Activated B cell treated with CpG ODN at 0.5 μM for 24 hours (primary cell): ENCODE measurements at regions of chr4 and their contacts with region 1.

Region 1: GRCh38 chr4:105146276-105147015 is at the start of gene TET2:
- DNase-seq: peak; percentile 72
- ATAC-seq: peak; percentile 80
- H3K4me3 Mint-ChIP-seq: peak within 1 kb of the TSS; percentile 99
- H3K27ac Mint-ChIP-seq: peak within 1 kb of the TSS; percentile 98
- H3K4me1 Mint-ChIP-seq: peaks cover 51% of the 10 kb centered on the region
- H3K27me3 Mint-ChIP-seq: no peaks in the 10 kb centered on the region
- CTCF ChIP-seq: no peak
- total RNA-seq, gene TET2: 39.7 and 51.2 TPM in 2 replicates

Region 2: GRCh38 chr4:104743215-104743653 is 403.2 kb before region 1 on chr4:
- CTCF ChIA-PET with region 1: no interaction called
- POLR2A ChIA-PET with region 1: no interaction called
- intact Hi-C with region 1: loop called (anchors 10 kb)
- DNase-seq: no peak
- ATAC-seq: peak; percentile 87
- H3K4me3 Mint-ChIP-seq: peak overlapping the region; percentile 42
- H3K27ac Mint-ChIP-seq: peak overlapping the region; percentile 83
- H3K4me1 Mint-ChIP-seq: peaks cover 22% of the 10 kb centered on the region
- H3K27me3 Mint-ChIP-seq: peaks cover 2% of the 10 kb centered on the region
- CTCF ChIP-seq: no peak

Region 3: GRCh38 chr4:104966349-104967033 is 180.0 kb before region 1 on chr4:
- CTCF ChIA-PET with region 1: no interaction called
- POLR2A ChIA-PET with region 1: no interaction called
- intact Hi-C with region 1: loop called (anchors 2 kb)
- DNase-seq: no peak
- ATAC-seq: peak; percentile 97
- H3K4me3 Mint-ChIP-seq: peak overlapping the region; percentile 70
- H3K27ac Mint-ChIP-seq: peak overlapping the region; percentile 86
- H3K4me1 Mint-ChIP-seq: peaks cover 23% of the 10 kb centered on the region
- H3K27me3 Mint-ChIP-seq: peaks cover 4% of the 10 kb centered on the region
- CTCF ChIP-seq: no peak

Region 4: GRCh38 chr4:105166066-105166465 is 19.6 kb after region 1 on chr4:
- CTCF ChIA-PET with region 1: no interaction called
- POLR2A ChIA-PET with region 1: no interaction called
- intact Hi-C with region 1: loop called (anchors 2 kb)
- DNase-seq: no peak
- ATAC-seq: no peak
- H3K4me3 Mint-ChIP-seq: no peak overlapping the region
- H3K27ac Mint-ChIP-seq: no peak overlapping the region
- H3K4me1 Mint-ChIP-seq: peaks cover 46% of the 10 kb centered on the region
- H3K27me3 Mint-ChIP-seq: no peaks in the 10 kb centered on the region
- CTCF ChIP-seq: no peak

Region 5: DNA sequence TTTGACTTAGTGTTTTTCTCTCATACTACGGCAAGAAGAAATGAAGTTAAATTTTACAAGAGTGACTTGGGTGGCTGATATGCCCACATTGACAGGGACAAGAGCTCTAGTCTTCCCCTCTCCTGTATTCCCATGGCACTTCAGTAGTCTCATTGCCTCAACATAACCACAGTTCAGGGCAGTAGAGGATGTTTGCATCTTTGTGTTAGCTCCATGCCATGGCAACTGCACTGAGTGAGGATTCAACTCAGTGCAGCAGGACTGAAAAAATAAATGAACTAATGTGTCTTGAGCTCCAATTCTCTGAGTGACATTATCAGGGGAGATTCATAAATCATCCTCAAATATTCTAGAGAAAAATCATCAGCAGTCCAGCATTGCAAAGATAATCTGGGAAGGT is 79.1 kb after region 1 on chr4:
- CTCF ChIA-PET with region 1: no interaction called
- POLR2A ChIA-PET with region 1: no interaction called
- intact Hi-C with region 1: no loop called
- DNase-seq: no peak
- ATAC-seq: no peak
- H3K4me3 Mint-ChIP-seq: no peak overlapping the region
- H3K27ac Mint-ChIP-seq: no peak overlapping the region
- H3K4me1 Mint-ChIP-seq: peaks cover 14% of the 10 kb centered on the region
- H3K27me3 Mint-ChIP-seq: no peaks in the 10 kb centered on the region
- CTCF ChIP-seq: no peak

Region 6: GRCh38 chr4:105236202-105236915 is 89.9 kb after region 1 on chr4:
- CTCF ChIA-PET with region 1: no interaction called
- POLR2A ChIA-PET with region 1: interaction called, 3 read pairs
- intact Hi-C with region 1: loop called (anchors 2 kb)
- DNase-seq: no peak
- ATAC-seq: peak; percentile 68
- H3K4me3 Mint-ChIP-seq: peak overlapping the region; percentile 46
- H3K27ac Mint-ChIP-seq: peak overlapping the region; percentile 73
- H3K4me1 Mint-ChIP-seq: peaks cover 65% of the 10 kb centered on the region
- H3K27me3 Mint-ChIP-seq: no peaks in the 10 kb centered on the region
- CTCF ChIP-seq: no peak

Region 7: DNA sequence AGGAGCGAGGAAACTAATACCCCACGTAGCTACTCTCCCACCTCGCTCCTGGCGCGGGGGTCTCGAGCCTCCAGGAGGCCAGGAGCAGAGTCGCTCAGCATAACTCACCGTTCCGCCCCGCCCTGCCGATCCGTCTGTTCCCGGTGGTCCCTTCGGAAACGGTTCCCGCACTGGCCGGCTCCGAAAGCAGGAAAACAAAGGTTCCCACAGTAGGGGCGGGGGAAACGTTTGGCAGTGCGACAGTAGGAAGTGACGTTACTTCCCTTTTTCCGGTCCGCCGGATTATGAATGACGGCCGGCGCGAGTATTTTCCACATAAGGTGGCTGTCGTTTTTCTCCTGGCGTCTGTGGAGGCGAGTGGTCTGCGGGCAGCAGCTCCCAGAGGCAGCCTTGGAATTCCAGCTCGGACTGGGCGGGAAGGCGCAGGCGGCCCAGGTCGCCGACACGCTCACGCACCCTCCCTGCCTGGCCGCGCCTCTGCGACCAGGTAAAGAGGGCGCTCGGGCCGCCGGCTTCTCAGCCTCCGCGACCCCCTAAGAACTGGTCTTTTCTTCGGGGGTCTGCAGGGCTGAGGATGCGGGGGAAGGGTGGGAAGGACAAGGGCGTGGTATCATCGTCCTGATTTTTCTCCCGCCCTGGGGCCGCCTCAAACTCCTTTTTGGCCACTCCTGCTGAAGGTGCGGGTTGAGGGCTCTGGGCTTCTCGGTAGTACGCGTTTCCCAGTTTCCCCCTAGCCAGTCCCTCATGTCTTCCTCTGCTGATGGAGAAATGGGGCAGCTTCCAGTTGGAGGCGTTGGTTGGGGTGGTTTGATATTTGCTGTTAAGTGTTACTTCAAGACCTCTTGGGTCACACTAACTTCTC is 562.3 kb after region 1 on chr4 and contains the starts of genes GSTCD and INTS12:
- CTCF ChIA-PET with region 1: no interaction called
- POLR2A ChIA-PET with region 1: no interaction called
- intact Hi-C with region 1: loop called (anchors 1 kb)
- DNase-seq: peak; percentile 83
- ATAC-seq: peak; percentile 95
- H3K4me3 Mint-ChIP-seq: peak within 1 kb of the TSS; percentile 99
- H3K27ac Mint-ChIP-seq: peak within 1 kb of the TSS; percentile 94
- H3K4me1 Mint-ChIP-seq: peaks cover 28% of the 10 kb centered on the region
- H3K27me3 Mint-ChIP-seq: no peaks in the 10 kb centered on the region
- CTCF ChIP-seq: no peak
- total RNA-seq, gene GSTCD: 11.3 and 12.3 TPM in 2 replicates
- total RNA-seq, gene INTS12: 18.6 and 20.6 TPM in 2 replicates